ENCODE measurements at regions of chr1 and their contacts with region 1.

Region 1: GRCh38 chr1:69567652-69568420 is at the start of gene LRRC7:
- DNase-seq: peak; percentile 70
- ATAC-seq: peak; percentile 67
- total RNA-seq, gene LRRC7: 3.3 TPM

Region 2: GRCh38 chr1:69611316-69611715 is 43.5 kb after region 1 on chr1:
- intact Hi-C with region 1: no loop called
- DNase-seq: no peak
- ATAC-seq: no peak

Region 3: DNA sequence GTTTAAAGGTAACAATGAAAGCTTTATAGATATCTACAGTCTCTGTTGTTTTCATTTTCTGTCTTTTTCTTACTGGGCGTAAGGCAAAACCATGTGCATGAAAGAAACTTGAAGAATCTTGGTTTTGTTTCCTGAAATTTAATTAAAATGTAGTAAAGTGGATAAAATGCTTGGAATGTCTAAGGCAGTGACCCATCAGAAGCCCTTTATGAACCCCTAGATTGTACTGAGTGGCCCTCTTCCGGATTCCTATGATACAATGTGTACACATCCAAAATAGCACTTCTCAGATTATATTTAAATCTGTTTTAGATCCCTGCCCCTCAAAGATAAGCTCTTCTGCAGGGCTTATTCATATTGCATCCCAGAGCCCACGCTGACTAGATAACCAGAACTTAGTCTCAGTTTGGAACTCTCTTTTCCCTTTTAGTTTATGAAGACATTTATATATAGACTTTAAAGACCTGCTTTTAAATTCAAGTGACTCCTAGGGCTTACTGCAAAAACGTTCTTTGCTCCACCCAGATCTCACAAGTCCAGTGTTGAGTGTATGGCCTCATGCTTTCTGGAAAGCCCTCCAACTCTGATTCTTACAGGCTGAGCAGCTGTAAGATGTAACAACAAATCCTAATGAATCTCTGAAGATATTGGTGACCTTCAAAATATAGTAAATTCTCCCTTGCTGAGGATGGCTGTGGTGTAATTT is 142.8 kb after region 1 on chr1:
- intact Hi-C with region 1: loop called (anchors 10 kb)
- DNase-seq: no peak
- ATAC-seq: peak; percentile 57

Measured in Right ventricle myocardium inferior (tissue), 1 donor.